Activated B cell treated with CpG ODN at 0.5 μM for 24 hours (primary cell): ENCODE measurements at regions of chr5 and their contacts with region 1.

Region 1: GRCh38 chr5:96743065-96743768 is 64.5 kb downstream of the ERAP1 start:
- DNase-seq: no peak
- ATAC-seq: no peak
- H3K4me3 Mint-ChIP-seq: no peak overlapping the region
- H3K27ac Mint-ChIP-seq: peak overlapping the region; percentile 74
- H3K4me1 Mint-ChIP-seq: peaks cover 5% of the 10 kb centered on the region
- H3K27me3 Mint-ChIP-seq: no peaks in the 10 kb centered on the region
- CTCF ChIP-seq: no peak

Region 2: DNA sequence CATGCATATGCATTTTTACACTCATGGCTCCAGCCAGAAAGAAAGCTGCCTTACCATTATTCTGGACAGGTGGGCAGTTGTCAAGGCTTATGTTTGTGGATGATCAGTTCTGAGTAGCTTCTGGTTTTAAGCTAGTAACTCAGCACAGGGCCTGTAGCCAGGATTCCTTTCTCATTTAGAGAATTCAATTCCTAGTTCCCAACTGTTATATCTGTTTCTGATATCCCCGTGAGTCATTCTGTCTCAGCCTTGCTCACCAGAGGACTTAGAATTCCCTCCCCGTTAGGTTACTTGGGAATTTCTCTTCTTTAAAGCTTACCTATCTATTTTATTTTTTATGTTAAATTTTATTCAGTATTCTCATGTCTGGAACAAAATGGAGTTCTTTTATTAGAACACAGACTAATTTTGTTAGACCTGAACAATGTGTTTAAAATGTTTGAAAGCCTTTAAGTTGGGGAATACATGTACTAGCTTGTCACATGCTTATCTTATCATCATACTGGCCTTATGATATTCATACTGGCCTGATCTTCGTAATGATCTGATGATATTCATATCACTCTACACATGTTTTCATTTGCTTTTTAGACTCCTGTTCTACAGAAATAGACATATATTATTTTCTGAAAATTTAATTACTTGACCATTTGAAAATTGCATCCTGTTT is 33.9 kb before region 1 on chr5:
- CTCF ChIA-PET with region 1: no interaction called
- POLR2A ChIA-PET with region 1: no interaction called
- intact Hi-C with region 1: loop called (anchors 5 kb)
- DNase-seq: no peak
- ATAC-seq: no peak
- H3K4me3 Mint-ChIP-seq: no peak overlapping the region
- H3K27ac Mint-ChIP-seq: no peak overlapping the region
- H3K4me1 Mint-ChIP-seq: peaks cover 17% of the 10 kb centered on the region
- H3K27me3 Mint-ChIP-seq: no peaks in the 10 kb centered on the region
- CTCF ChIP-seq: no peak

Region 3: GRCh38 chr5:96844476-96844990 is 101.3 kb after region 1 on chr5:
- CTCF ChIA-PET with region 1: no interaction called
- POLR2A ChIA-PET with region 1: no interaction called
- intact Hi-C with region 1: no loop called
- DNase-seq: no peak
- ATAC-seq: no peak
- H3K4me3 Mint-ChIP-seq: no peak overlapping the region
- H3K27ac Mint-ChIP-seq: no peak overlapping the region
- H3K4me1 Mint-ChIP-seq: peaks cover 12% of the 10 kb centered on the region
- H3K27me3 Mint-ChIP-seq: peaks cover under 1% of the 10 kb centered on the region
- CTCF ChIP-seq: no peak